HAP-1 (cell line): ENCODE measurements at regions of chr7 and their contacts with region 1.

Region 1: GRCh38 chr7:135970682-135971365 is 6.3 kb downstream of the MTPN start:
- DNase-seq: no peak
- H3K4me3 ChIP-seq: no peak overlapping the region
- H3K4me1 ChIP-seq: peaks cover 8% of the 10 kb centered on the region; the same call in 1 of the 2 replicates
- H3K27me3 ChIP-seq: no peaks in the 10 kb centered on the region

Region 2: GRCh38 chr7:135662373-135663114 is 308.3 kb before region 1 on chr7 and contains the start of gene STMP1:
- in situ Hi-C with region 1: loop called (anchors 25 kb)
- DNase-seq: peak; percentile 83 to 98
- H3K4me3 ChIP-seq: peak within 1 kb of the TSS; percentile 87
- H3K4me1 ChIP-seq: peaks cover 11% of the 10 kb centered on the region; the same call in 1 of the 2 replicates
- H3K27me3 ChIP-seq: no peaks in the 10 kb centered on the region

Region 3: DNA sequence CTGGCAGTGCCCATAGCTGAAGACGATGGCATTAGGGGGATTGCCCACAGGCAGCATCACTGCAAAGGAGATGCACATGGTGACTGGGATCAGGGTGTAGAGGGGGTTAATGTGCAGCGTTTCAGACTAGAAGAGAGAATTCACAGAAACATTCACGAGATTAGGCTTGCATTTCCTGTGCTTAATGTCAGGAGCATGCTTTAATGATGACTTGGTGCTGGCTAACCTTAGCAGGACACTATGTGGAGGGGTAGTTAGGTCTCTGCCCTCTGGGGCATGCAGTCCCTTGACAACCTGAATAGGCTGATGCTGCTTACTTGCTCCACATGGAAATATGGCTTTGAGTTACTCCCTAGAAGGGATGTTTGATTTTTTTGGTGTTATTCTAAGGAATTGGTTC is 286.7 kb before region 1 on chr7:
- in situ Hi-C with region 1: no loop called
- DNase-seq: no peak
- H3K4me3 ChIP-seq: no peak overlapping the region
- H3K4me1 ChIP-seq: no peaks in the 10 kb centered on the region
- H3K27me3 ChIP-seq: no peaks in the 10 kb centered on the region

Region 4: DNA sequence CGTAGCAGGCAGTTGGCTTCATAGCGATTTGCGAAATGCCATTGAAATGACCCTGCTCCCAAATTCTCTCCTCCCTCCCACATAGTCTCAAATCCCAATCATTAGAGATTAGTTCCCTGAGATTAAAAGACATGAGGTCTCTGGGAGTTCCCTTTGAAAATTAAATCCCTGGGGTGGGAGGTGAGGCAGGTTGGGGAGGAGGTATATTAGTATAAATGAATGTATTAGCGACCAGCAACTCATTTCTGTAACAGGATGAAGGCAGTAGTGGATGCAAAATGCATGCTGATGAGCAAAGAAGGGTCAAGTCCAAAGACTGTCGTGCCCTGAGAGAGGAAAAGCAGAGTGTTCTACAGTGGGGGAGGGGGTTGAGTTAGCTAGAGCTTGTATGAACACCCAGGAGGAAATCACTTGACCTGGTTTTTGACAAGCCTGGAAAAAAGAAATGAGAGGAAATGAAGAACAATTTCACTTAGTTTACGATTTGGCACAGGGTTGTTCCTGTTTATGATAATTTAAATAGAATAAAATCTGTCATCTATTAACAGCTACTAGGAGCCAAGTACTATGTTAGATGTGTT is 85.9 kb after region 1 on chr7:
- in situ Hi-C with region 1: no loop called
- DNase-seq: no peak
- H3K4me3 ChIP-seq: no peak overlapping the region
- H3K4me1 ChIP-seq: no peaks in the 10 kb centered on the region
- H3K27me3 ChIP-seq: peaks cover 3% of the 10 kb centered on the region; the same call in 1 of the 2 replicates